ENCODE measurements at regions of chrX and their contacts with region 1.

Region 1: GRCh38 chrX:153778684-153779101 is 2.1 kb upstream of the SRPK3 start:
- DNase-seq: peak; percentile 33
- ATAC-seq: peak; percentile 27
- H3K4me3 Mint-ChIP-seq: no peak overlapping the region
- H3K27ac Mint-ChIP-seq: no peak overlapping the region
- H3K4me1 Mint-ChIP-seq: no peaks in the 10 kb centered on the region; the same call in 1 of the 2 replicates
- H3K27me3 Mint-ChIP-seq: no peaks in the 10 kb centered on the region
- CTCF ChIP-seq: no peak

Region 2: GRCh38 chrX:153885968-153886903 is 107.5 kb after region 1 on chrX and contains the start of gene L1CAM:
- CTCF ChIA-PET with region 1: interaction called, 12 read pairs
- POLR2A ChIA-PET with region 1: no interaction called
- DNase-seq: peak; percentile 49
- ATAC-seq: peak; percentile 19
- H3K4me3 Mint-ChIP-seq: peak within 1 kb of the TSS; percentile 68
- H3K27ac Mint-ChIP-seq: no peak within 1 kb of the TSS
- H3K4me1 Mint-ChIP-seq: peaks cover 24% of the 10 kb centered on the region
- H3K27me3 Mint-ChIP-seq: peaks cover 10% of the 10 kb centered on the region
- CTCF ChIP-seq: no peak
- total RNA-seq, gene L1CAM: 40.2 to 55.2 TPM (median 49.4 TPM) in 3 replicates